Activated CD8-positive, alpha-beta T cell treated with anti-CD3 and anti-CD28 coated beads, Interleukin-2, amount 10 ng/mL, durations not matched to agents 7 days and 5 days (primary cell): ENCODE measurements at regions of chr6 and their contacts with region 1.

Region 1: DNA sequence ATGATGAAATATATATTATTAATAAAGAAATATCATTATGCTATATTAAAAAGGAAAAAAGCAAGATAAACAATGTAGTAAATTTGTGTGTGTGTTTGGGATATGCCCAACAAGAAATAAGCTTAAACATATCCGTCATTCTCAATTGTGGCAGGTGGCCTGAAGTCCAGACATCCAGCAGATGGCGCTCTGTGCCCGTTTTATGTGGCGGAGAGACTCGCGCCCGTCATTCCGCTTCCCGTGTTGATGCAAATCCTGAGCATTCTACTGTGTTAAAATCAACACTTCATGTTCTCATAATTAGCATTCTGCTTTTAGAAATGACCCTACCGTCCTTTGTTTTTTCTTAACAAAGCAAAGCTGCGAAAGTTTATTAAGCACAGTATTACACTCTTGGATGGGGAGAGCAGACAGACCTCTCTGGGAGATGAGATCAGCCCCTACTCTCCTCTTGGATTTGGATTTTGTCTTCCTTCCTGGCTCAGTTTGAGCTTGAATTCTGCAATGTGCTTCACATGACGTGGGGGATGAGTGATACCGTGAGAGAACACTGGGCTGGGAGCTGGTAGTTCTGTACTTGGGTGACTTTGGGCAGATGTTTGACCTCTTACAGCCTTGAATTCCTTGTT is 125.8 kb downstream of the MCHR2 start:
- DNase-seq: peak; percentile 80
- ATAC-seq: peak; percentile 60
- H3K4me3 Mint-ChIP-seq: no peak overlapping the region
- H3K27ac Mint-ChIP-seq: no peak overlapping the region
- H3K4me1 Mint-ChIP-seq: no peaks in the 10 kb centered on the region
- H3K27me3 Mint-ChIP-seq: peaks cover 19% of the 10 kb centered on the region

Region 2: GRCh38 chr6:99790679-99791078 is 77.5 kb before region 1 on chr6:
- CTCF ChIA-PET with region 1: no interaction called
- POLR2A ChIA-PET with region 1: no interaction called
- DNase-seq: no peak
- ATAC-seq: no peak
- H3K4me3 Mint-ChIP-seq: no peak overlapping the region
- H3K27ac Mint-ChIP-seq: no peak overlapping the region
- H3K4me1 Mint-ChIP-seq: no peaks in the 10 kb centered on the region
- H3K27me3 Mint-ChIP-seq: peaks cover 16% of the 10 kb centered on the region

Region 3: DNA sequence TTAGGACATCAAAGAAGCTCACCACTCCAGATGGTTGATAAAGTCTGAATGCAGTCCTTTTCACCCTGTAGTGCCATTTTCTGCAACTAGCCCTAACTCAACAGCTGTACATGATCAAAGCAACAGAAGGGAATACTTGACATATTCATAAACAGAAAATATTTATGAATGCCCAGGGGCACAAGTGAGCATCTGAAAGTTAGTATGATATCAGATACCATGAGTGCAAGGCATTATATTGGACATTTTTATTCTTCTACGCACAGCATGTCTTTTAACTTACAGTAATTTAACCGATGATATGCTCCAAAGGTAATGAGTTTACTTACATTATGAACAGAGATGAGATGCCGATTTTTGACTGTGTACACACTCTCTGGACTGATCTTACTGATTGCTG is 16.2 kb before region 1 on chr6:
- CTCF ChIA-PET with region 1: interaction called, 18 read pairs
- POLR2A ChIA-PET with region 1: no interaction called
- DNase-seq: no peak
- ATAC-seq: no peak
- H3K4me3 Mint-ChIP-seq: no peak overlapping the region
- H3K27ac Mint-ChIP-seq: no peak overlapping the region
- H3K4me1 Mint-ChIP-seq: no peaks in the 10 kb centered on the region
- H3K27me3 Mint-ChIP-seq: peaks cover 11% of the 10 kb centered on the region

Region 4: GRCh38 chr6:99882128-99882702 is 14.0 kb after region 1 on chr6:
- CTCF ChIA-PET with region 1: interaction called, 20 read pairs
- POLR2A ChIA-PET with region 1: no interaction called
- DNase-seq: no peak
- ATAC-seq: no peak
- H3K4me3 Mint-ChIP-seq: no peak overlapping the region
- H3K27ac Mint-ChIP-seq: no peak overlapping the region
- H3K4me1 Mint-ChIP-seq: no peaks in the 10 kb centered on the region
- H3K27me3 Mint-ChIP-seq: peaks cover 2% of the 10 kb centered on the region

Region 5: DNA sequence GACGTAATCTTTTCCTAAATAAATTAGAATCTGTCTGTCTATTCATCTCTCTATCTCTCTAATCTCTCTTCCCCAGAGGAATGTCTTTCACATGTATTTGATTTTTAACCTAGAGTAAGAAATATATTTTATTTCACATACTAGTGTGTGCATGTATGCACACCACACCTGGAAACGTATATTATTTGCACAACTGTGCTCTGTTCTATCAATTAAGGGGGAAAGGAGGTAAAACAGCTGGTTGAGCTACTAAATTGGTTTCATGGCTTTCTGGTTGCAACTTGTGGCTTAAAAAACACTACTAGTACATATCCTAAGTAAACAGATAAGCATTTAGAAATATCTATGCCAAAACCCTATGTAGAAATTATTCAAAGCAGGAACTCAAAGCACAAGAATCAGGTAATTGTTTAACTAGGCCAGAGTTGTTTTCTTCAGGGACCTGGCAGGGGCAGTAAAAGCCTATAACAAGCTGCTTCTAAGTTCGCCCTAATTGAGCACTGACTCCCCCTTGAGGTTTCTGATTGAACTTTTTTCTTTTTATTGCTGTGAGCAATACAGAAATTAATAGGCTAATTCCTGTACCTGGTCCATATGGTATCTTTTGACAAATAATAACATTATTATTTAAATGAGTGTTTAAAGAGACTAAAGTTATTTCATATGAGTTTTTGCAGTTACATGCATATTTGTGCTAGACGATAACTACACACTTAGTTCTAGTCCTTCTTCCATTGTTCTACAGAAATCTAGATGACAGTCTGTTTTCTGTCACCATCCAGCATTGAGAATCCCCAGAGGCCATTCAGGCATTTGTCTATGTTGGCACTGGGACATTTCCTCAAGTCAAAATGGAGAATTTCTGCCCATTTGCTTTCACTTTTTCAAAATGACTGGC is 37.3 kb after region 1 on chr6:
- CTCF ChIA-PET with region 1: interaction called, 15 read pairs
- POLR2A ChIA-PET with region 1: no interaction called
- DNase-seq: no peak
- ATAC-seq: peak; percentile 55
- H3K4me3 Mint-ChIP-seq: no peak overlapping the region
- H3K27ac Mint-ChIP-seq: no peak overlapping the region
- H3K4me1 Mint-ChIP-seq: no peaks in the 10 kb centered on the region
- H3K27me3 Mint-ChIP-seq: peaks cover 6% of the 10 kb centered on the region

Region 6: GRCh38 chr6:99940582-99940981 is 72.4 kb after region 1 on chr6:
- CTCF ChIA-PET with region 1: no interaction called
- POLR2A ChIA-PET with region 1: no interaction called
- DNase-seq: no peak
- ATAC-seq: no peak
- H3K4me3 Mint-ChIP-seq: no peak overlapping the region
- H3K27ac Mint-ChIP-seq: no peak overlapping the region
- H3K4me1 Mint-ChIP-seq: no peaks in the 10 kb centered on the region
- H3K27me3 Mint-ChIP-seq: no peaks in the 10 kb centered on the region

Region 7: DNA sequence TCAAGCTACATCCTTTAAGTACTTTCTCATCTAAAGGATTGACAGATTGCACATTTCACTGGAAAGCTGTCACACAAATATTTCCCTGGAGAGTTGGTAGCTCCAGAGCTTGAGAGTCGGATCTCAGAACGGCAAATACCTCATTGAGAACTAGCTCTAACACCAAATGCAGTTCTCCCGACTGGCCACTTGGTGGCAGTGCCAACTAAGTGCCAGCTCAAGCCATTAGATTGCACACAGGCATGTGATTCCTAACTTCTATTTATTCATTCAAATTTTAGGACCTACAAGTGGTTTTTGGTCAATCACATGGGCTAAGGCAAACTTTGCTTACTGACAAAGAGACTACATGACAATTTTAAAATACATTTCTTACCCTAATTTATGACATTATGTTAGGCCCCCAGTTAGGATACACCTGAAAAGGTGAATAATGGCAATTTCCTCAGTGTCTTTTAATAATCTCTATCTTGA is 133.8 kb after region 1 on chr6:
- CTCF ChIA-PET with region 1: interaction called, 14 read pairs
- POLR2A ChIA-PET with region 1: no interaction called
- DNase-seq: peak; percentile 45
- ATAC-seq: peak; percentile 61
- H3K4me3 Mint-ChIP-seq: no peak overlapping the region
- H3K27ac Mint-ChIP-seq: no peak overlapping the region
- H3K4me1 Mint-ChIP-seq: no peaks in the 10 kb centered on the region
- H3K27me3 Mint-ChIP-seq: peaks cover 19% of the 10 kb centered on the region

Region 8: GRCh38 chr6:100099189-100100074 is 231.2 kb after region 1 on chr6:
- CTCF ChIA-PET with region 1: interaction called, 22 read pairs
- POLR2A ChIA-PET with region 1: no interaction called
- DNase-seq: no peak
- ATAC-seq: no peak
- H3K4me3 Mint-ChIP-seq: no peak overlapping the region
- H3K27ac Mint-ChIP-seq: no peak overlapping the region
- H3K4me1 Mint-ChIP-seq: no peaks in the 10 kb centered on the region
- H3K27me3 Mint-ChIP-seq: peaks cover 2% of the 10 kb centered on the region